Activated T-helper 1 cell treated with anti-CD3 and anti-CD28 coated beads, Interleukin-12 subunit alpha, Interleukin-12 subunit beta, Interleukin-2, Interleukin-4 antibody, amounts not matched to agents 30 ng/mL and 10 ng/mL and 1 ng/mL, durations not matched to agents 14 hours and 24 hours and 36 hours (primary cell): ENCODE measurements at regions of chr19 and their contacts with region 1.

Region 1: DNA sequence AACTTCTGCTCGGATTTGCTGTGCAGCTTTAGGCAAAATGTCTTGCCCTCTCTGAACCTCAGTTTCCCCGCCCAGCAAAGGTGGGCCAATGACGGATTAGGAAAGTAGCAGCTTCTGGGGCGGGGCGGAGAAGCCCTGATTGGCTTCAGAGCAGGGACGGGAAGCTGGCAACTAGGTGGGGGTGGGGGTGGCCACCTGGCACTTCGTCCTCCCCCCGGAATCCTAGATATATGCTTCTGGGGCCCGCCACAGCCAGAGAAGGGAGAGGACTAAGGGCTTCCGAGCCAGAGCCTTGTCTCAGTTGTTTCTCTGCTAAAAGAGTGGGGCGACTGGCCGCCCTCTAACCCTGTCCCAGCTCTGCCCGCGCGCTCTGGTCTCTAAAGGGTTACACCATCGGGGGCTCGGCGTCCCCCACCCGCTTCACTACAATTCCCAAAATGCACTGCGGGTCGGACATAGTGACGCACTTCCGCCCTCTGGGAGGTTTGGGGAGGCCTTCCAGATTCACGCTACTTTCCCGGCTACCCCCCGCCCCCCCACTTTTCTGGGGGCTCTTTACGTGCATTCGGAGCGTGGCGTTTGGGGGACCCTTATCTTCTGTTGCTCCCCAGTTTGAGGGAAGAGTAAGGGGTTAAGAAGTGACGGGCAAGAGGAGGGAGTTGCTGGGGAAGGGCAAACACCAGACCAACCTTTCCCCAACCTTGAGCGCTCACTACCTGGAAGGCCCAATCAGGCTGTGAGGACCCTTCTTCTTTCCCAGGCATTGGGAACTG is 672 bp upstream of the IRF2BP1 start:
- DNase-seq: peak; percentile 88
- H3K4me3 Mint-ChIP-seq: peak overlapping the region; percentile 88
- H3K27ac Mint-ChIP-seq: peak overlapping the region; percentile 95
- H3K4me1 Mint-ChIP-seq: peaks cover 13% of the 10 kb centered on the region
- H3K27me3 Mint-ChIP-seq: peaks cover 1% of the 10 kb centered on the region

Region 2: DNA sequence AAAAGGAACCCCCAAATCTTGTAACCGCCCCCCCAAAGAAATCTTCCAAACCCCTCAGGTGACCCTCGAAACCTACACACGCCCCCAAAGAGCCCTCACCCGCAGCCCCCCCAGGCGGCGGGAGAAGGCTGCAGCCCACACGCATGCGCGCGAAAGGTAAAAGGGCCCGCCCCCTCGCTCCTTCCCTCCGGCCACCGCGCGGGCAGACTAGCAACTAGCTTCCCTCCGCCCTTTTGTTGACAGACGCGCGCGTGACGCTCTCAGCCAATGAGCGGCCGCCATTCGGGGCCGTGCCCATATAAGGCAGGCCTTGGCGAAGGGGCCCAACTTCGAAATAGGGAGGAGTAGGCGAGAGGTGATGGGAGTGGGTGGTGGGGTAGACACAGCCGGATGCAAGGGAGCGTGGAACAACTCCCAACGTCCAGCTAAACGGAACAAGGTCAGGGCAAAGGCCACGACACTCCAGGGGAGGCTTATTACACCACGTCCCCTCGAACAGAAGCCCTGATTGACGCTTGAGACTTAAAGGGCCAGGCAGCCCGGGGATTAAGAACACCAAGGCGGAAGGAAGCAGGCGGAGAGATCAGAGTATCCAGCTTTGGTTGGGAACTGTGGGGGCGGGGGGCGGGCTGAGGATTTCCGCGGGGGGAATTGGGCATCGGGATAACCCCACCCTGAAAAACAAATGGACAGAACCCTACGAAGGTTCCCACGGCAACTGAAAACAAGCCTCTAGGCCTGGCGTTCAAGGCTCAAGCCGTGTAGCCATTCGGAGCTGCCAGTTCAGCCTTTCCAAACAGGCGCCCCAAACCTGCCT is 169.2 kb before region 1 on chr19:
- intact Hi-C with region 1: loop called (anchors 1 kb)
- DNase-seq: peak; percentile 99
- H3K4me3 Mint-ChIP-seq: peak overlapping the region; percentile 96
- H3K27ac Mint-ChIP-seq: peak overlapping the region; percentile 96
- H3K4me1 Mint-ChIP-seq: peaks cover 40% of the 10 kb centered on the region
- H3K27me3 Mint-ChIP-seq: no peaks in the 10 kb centered on the region

Region 3: DNA sequence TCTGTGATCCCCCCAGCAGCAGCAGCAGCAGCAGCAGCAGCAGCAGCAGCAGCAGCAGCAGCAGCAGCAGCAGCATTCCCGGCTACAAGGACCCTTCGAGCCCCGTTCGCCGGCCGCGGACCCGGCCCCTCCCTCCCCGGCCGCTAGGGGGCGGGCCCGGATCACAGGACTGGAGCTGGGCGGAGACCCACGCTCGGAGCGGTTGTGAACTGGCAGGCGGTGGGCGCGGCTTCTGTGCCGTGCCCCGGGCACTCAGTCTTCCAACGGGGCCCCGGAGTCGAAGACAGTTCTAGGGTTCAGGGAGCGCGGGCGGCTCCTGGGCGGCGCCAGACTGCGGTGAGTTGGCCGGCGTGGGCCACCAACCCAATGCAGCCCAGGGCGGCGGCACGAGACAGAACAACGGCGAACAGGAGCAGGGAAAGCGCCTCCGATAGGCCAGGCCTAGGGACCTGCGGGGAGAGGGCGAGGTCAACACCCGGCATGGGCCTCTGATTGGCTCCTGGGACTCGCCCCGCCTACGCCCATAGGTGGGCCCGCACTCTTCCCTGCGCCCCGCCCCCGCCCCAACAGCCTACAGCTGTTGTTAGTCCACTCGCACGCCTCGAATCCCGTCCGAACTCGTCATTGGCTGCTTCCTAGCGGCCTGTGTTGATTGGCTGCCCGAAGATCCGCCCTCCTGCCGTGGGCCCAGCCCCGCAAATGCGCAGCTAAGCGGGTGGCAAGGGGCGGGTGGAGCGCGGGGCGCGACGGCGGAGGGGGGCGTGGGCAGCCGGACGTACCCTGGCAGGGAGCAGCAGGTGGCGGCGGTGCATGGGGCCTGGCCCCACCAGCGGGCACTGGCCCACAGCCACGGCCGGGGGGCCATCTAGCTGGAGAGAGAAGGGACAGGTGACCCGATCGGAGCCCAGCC is 116.2 kb before region 1 on chr19:
- intact Hi-C with region 1: loop called (anchors 1 kb)
- DNase-seq: peak; percentile 85
- H3K4me3 Mint-ChIP-seq: peak overlapping the region; percentile 88
- H3K27ac Mint-ChIP-seq: no peak overlapping the region
- H3K4me1 Mint-ChIP-seq: peaks cover 9% of the 10 kb centered on the region
- H3K27me3 Mint-ChIP-seq: peaks cover 20% of the 10 kb centered on the region

Region 4: GRCh38 chr19:45902651-45903625 is 16.3 kb after region 1 on chr19:
- intact Hi-C with region 1: loop called (anchors 1 kb)
- DNase-seq: peak; percentile 100
- H3K4me3 Mint-ChIP-seq: peak overlapping the region; percentile 88
- H3K27ac Mint-ChIP-seq: peak overlapping the region; percentile 80
- H3K4me1 Mint-ChIP-seq: peaks cover 16% of the 10 kb centered on the region
- H3K27me3 Mint-ChIP-seq: peaks cover 1% of the 10 kb centered on the region

Region 5: DNA sequence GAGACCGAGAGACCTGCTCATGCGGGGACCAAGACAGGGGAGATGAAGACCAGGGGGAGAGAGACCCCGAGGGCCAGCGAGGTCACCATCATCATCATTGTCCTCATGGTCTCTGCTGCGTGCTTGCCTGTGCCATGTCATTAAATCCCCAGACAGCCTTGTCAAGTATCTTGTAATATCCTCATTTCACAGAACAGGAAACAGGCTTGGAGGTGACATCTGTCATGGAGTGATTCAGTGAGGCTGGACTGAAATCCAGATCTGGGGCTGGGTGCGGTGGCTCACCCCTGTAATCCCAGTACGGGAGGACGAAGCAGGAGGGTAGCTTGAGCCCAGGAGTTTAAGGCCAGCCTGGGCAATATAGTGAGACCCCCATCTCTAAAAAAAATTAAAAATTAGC is 33.8 kb after region 1 on chr19:
- intact Hi-C with region 1: no loop called
- DNase-seq: no peak
- H3K4me3 Mint-ChIP-seq: peak overlapping the region; percentile 5
- H3K27ac Mint-ChIP-seq: no peak overlapping the region
- H3K4me1 Mint-ChIP-seq: peaks cover 38% of the 10 kb centered on the region
- H3K27me3 Mint-ChIP-seq: peaks cover 9% of the 10 kb centered on the region

Region 6: GRCh38 chr19:45994989-45995714 is 108.5 kb after region 1 on chr19 and contains the start of gene CCDC61:
- intact Hi-C with region 1: loop called (anchors 1 kb)
- DNase-seq: peak; percentile 96
- H3K4me3 Mint-ChIP-seq: no peak within 1 kb of the TSS
- H3K27ac Mint-ChIP-seq: no peak within 1 kb of the TSS
- H3K4me1 Mint-ChIP-seq: peaks cover 17% of the 10 kb centered on the region
- H3K27me3 Mint-ChIP-seq: peaks cover 4% of the 10 kb centered on the region
- total RNA-seq, gene CCDC61: 24.0 and 24.1 TPM in 2 replicates

Region 7: GRCh38 chr19:46181388-46181779 is 294.8 kb after region 1 on chr19:
- intact Hi-C with region 1: no loop called
- DNase-seq: no peak
- H3K4me3 Mint-ChIP-seq: no peak overlapping the region
- H3K27ac Mint-ChIP-seq: peak overlapping the region; percentile 31
- H3K4me1 Mint-ChIP-seq: peaks cover 23% of the 10 kb centered on the region
- H3K27me3 Mint-ChIP-seq: peaks cover 7% of the 10 kb centered on the region